Activated CD8-positive, alpha-beta T cell treated with anti-CD3 and anti-CD28 coated beads, Interleukin-2, amount 10 ng/mL, durations not matched to agents 7 days and 5 days (primary cell): ENCODE measurements at regions of chr6 and their contacts with region 1.

Region 1: GRCh38 chr6:133973109-133973971 is 20.3 kb downstream of the TBPL1 start:
- DNase-seq: no peak
- ATAC-seq: peak; percentile 45
- H3K4me3 Mint-ChIP-seq: no peak overlapping the region
- H3K27ac Mint-ChIP-seq: no peak overlapping the region
- H3K4me1 Mint-ChIP-seq: peaks cover 17% of the 10 kb centered on the region
- H3K27me3 Mint-ChIP-seq: no peaks in the 10 kb centered on the region

Region 2: GRCh38 chr6:133871131-133871530 is 102.2 kb before region 1 on chr6:
- CTCF ChIA-PET with region 1: no interaction called
- POLR2A ChIA-PET with region 1: no interaction called
- DNase-seq: no peak
- ATAC-seq: no peak
- H3K4me3 Mint-ChIP-seq: no peak overlapping the region
- H3K27ac Mint-ChIP-seq: no peak overlapping the region
- H3K4me1 Mint-ChIP-seq: no peaks in the 10 kb centered on the region
- H3K27me3 Mint-ChIP-seq: peaks cover 12% of the 10 kb centered on the region

Region 3: DNA sequence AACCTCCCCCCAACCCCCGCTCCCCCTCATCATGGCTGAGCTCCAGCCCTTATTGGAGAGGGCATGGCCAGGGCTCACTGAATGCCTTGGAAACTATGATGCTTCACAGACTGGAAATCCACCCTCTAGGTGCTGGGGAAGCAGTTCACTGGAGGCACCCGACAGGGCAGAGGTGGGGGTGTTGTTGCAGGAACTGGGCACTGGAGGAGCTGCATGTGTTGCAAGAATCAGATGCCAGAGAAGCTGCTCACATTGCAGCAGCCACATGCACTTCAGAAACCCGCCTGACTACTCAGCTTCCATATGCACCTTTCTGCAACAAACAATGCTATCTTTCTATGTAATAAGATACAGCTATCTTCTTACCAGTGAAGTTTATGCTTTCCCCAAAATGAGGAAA is 28.2 kb before region 1 on chr6:
- CTCF ChIA-PET with region 1: interaction called, 11 read pairs
- POLR2A ChIA-PET with region 1: no interaction called
- DNase-seq: no peak
- ATAC-seq: no peak
- H3K4me3 Mint-ChIP-seq: no peak overlapping the region
- H3K27ac Mint-ChIP-seq: no peak overlapping the region
- H3K4me1 Mint-ChIP-seq: no peaks in the 10 kb centered on the region
- H3K27me3 Mint-ChIP-seq: peaks cover 14% of the 10 kb centered on the region

Region 4: DNA sequence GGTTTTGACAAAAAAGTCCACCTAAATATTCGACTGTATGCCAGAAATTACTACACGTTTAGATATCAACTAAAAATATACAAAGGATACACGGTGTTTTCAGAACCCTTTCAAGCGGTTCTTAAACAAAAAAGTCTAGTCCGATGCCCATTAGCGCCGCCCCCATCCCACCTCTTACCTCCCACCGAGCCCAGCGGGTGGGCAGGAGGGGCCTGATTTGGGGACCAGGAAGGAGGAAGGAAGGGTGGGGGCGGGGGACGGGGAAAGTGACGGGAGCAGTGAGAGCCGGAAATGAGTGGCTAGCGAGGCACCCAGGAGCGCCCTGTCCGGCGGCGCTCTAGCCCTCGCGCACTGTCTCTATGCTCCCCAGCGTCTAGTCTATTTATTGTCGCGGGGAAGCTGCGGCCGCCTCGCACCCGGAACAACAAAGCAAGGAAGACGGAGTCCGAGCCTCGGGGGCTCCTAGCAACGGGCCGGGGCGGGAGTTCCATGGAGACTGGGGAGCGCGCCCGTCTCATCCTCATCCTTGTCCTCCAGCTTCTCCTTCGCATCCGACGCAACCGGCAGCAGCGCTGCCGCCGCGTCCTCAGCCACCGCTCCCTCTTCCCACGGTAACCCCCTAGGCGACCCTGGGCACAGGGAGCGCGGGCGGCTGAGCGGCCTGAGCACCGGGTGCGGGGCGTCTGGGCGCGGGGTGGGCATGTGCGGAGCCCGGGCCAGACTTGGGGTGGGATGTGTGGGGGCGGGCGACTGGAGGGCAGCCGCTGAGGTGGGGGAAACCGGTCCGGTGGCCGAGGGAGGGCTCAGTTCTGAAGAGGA is 20.3 kb before region 1 on chr6 and contains the start of gene TBPL1:
- CTCF ChIA-PET with region 1: interaction called, 36 read pairs
- POLR2A ChIA-PET with region 1: interaction called, 5 read pairs
- DNase-seq: peak; percentile 92
- ATAC-seq: peak; percentile 94
- H3K4me3 Mint-ChIP-seq: peak within 1 kb of the TSS; percentile 95
- H3K27ac Mint-ChIP-seq: peak within 1 kb of the TSS; percentile 85
- H3K4me1 Mint-ChIP-seq: peaks cover 41% of the 10 kb centered on the region
- H3K27me3 Mint-ChIP-seq: peaks cover 10% of the 10 kb centered on the region
- total RNA-seq, gene TBPL1: 29.1 to 35.2 TPM

Region 5: DNA sequence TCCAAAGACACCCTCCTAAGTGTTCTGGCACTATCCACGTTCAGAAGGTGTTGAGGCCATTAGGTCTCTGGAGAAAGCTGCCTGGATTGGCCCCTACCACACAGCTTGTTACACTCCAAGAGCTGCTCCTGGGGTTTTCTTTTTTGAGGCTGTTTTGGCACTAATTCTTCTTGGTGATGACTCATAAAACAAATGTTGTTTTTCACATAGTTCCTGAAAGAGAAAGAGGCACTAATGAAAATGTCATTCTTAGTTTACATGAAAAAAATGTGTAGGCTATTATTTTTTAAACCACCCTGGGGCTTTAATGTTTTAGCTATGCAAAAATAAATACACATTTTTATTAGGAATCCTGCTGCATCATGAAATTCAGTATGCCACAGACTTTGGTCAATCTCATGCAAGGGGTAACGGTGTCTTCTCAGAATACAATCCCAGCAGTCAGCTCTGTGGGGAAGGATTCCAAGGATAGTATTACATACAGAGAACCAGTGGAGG is 17.8 kb after region 1 on chr6:
- CTCF ChIA-PET with region 1: interaction called, 11 read pairs
- POLR2A ChIA-PET with region 1: no interaction called
- DNase-seq: no peak
- ATAC-seq: no peak
- H3K4me3 Mint-ChIP-seq: no peak overlapping the region
- H3K27ac Mint-ChIP-seq: no peak overlapping the region
- H3K4me1 Mint-ChIP-seq: peaks cover 4% of the 10 kb centered on the region
- H3K27me3 Mint-ChIP-seq: no peaks in the 10 kb centered on the region

Region 6: DNA sequence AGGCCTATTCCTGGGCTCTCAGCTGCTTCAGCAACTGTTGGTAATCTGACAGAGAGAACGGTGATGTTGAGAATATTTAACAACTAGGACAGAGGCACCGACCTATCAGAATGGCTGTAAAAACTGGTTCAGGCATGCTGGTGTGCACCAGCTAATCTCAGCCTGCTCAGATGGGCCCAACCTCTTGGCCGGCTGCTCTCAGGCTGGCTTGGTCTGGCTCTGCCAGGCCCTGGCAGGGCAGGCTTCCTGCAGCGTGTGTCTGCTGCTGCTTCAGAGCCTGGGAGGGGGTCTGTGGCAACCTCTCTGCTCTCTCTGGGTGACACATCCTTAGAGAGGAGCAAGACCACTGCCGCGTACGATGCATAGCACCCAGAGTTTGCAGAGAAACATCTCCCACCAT is 74.3 kb after region 1 on chr6:
- CTCF ChIA-PET with region 1: interaction called, 20 read pairs
- POLR2A ChIA-PET with region 1: interaction called, 5 read pairs
- DNase-seq: no peak
- ATAC-seq: no peak
- H3K4me3 Mint-ChIP-seq: no peak overlapping the region
- H3K27ac Mint-ChIP-seq: no peak overlapping the region
- H3K4me1 Mint-ChIP-seq: peaks cover 11% of the 10 kb centered on the region
- H3K27me3 Mint-ChIP-seq: peaks cover 13% of the 10 kb centered on the region

Region 7: GRCh38 chr6:134074151-134075055 is 101.1 kb after region 1 on chr6:
- CTCF ChIA-PET with region 1: interaction called, 10 read pairs
- POLR2A ChIA-PET with region 1: no interaction called
- DNase-seq: no peak
- ATAC-seq: no peak
- H3K4me3 Mint-ChIP-seq: no peak overlapping the region
- H3K27ac Mint-ChIP-seq: no peak overlapping the region
- H3K4me1 Mint-ChIP-seq: peaks cover 13% of the 10 kb centered on the region
- H3K27me3 Mint-ChIP-seq: peaks cover 3% of the 10 kb centered on the region